Posterior cingulate gyrus (tissue), 11 donors: ENCODE measurements at regions of chr4 and their contacts with region 1.

Region 1: DNA sequence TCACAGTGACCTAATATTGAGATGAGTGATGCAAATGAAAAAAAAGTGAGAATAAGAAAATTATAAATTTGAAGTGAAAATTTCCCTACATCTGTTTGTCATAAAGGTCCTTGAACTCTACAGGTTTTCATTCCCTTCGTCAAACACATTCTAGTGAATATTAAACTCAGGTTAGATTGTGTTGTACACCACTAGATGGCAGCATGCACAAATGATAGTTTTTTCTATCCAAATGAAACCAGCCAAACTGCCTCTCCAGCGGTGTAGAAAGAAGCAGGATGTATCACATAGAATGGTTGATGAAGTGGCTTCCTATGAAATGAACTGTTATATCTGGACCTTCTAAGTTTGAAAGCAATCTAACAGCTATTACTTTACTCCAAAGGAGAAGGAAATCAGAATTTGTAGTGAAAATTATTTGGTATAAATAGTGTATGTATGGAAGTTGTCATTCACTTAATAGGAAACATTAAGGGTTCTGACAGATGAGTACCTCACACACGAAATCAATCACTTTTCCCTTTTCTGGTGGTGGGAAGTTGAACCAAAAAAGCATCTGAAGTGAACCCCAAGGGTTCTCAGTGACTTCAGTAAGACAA is 382.7 kb downstream of the UNC5C start:
- DNase-seq: no peak

Region 2: GRCh38 chr4:95204873-95205272 is 38.8 kb after region 1 on chr4:
- intact Hi-C with region 1: loop called (anchors 5 kb)
- DNase-seq: no peak

Region 3: GRCh38 chr4:95549246-95550114 is 383.5 kb after region 1 on chr4:
- intact Hi-C with region 1: loop called (anchors 2 kb)
- DNase-seq: peak in 9 of 10 donors; percentile 58 to 94 (median 79)

Region 4: GRCh38 chr4:96035727-96036126 is 869.7 kb after region 1 on chr4:
- intact Hi-C with region 1: loop called (anchors 5 kb)
- DNase-seq: peak in 1 of 10 donors; percentile 9